CD4-positive, alpha-beta memory T cell (primary cell): ENCODE measurements at regions of chr2 and their contacts with region 1.

Region 1: GRCh38 chr2:46657042-46657504 is 177.7 kb downstream of the TMEM247 start:
- DNase-seq: peak in 3 of 5 donors; percentile 6 to 10 (median 7)
- H3K4me3 ChIP-seq: no peak overlapping the region
- H3K4me3 Mint-ChIP-seq: no peak overlapping the region
- H3K27ac ChIP-seq: no peak overlapping the region
- H3K27ac Mint-ChIP-seq: no peak overlapping the region
- H3K4me1 ChIP-seq: no peaks in the 10 kb centered on the region
- H3K4me1 Mint-ChIP-seq: peaks cover 0 to 3% (median under 1%) of the 10 kb centered on the region in 4 donors
- H3K27me3 ChIP-seq: no peaks in the 10 kb centered on the region
- H3K27me3 Mint-ChIP-seq: peaks cover 0 to 7% of the 10 kb centered on the region in 2 donors

Region 2: GRCh38 chr2:46776687-46777327 is 119.7 kb after region 1 on chr2:
- CTCF ChIA-PET with region 1: interaction called, 32 read pairs
- POLR2A ChIA-PET with region 1: no interaction called
- intact Hi-C with region 1: loop called (anchors 1 kb)
- DNase-seq: peak in 4 of 5 donors; percentile 20 to 28 (median 26)
- H3K4me3 ChIP-seq: no peak overlapping the region
- H3K4me3 Mint-ChIP-seq: no peak overlapping the region
- H3K27ac ChIP-seq: no peak overlapping the region
- H3K27ac Mint-ChIP-seq: no peak overlapping the region
- H3K4me1 ChIP-seq: no peaks in the 10 kb centered on the region
- H3K4me1 Mint-ChIP-seq: no peaks in the 10 kb centered on the region
- H3K27me3 ChIP-seq: peaks cover 13% of the 10 kb centered on the region
- H3K27me3 Mint-ChIP-seq: peaks cover 0 to 5% of the 10 kb centered on the region in 2 donors